Stomach (tissue), 19 donors: ENCODE measurements at regions of chr17 and their contacts with region 1.

Region 1: GRCh38 chr17:79796763-79797491 is at the start of gene CBX8:
- DNase-seq: peak; percentile 100
- H3K4me3 ChIP-seq: peak within 1 kb of the TSS; percentile 54 to 75 (median 70)
- H3K27ac ChIP-seq: peak within 1 kb of the TSS; percentile 78 to 88 (median 87)
- H3K4me1 ChIP-seq: peaks cover 49 to 80% (median 66%) of the 10 kb centered on the region in 4 donors
- H3K27me3 ChIP-seq: peaks cover 49 to 81% (median 64%) of the 10 kb centered on the region in 3 donors
- CTCF ChIP-seq: peak in 3 of 7 experiments; percentile 12 to 41 (median 40)
- EP300 ChIP-seq: no peak
- POLR2A ChIP-seq: no peak
- total RNA-seq, gene CBX8: 2.8 to 140 (median 12.0) TPM in 3 of 5 donors, not detected in the others

Region 2: DNA sequence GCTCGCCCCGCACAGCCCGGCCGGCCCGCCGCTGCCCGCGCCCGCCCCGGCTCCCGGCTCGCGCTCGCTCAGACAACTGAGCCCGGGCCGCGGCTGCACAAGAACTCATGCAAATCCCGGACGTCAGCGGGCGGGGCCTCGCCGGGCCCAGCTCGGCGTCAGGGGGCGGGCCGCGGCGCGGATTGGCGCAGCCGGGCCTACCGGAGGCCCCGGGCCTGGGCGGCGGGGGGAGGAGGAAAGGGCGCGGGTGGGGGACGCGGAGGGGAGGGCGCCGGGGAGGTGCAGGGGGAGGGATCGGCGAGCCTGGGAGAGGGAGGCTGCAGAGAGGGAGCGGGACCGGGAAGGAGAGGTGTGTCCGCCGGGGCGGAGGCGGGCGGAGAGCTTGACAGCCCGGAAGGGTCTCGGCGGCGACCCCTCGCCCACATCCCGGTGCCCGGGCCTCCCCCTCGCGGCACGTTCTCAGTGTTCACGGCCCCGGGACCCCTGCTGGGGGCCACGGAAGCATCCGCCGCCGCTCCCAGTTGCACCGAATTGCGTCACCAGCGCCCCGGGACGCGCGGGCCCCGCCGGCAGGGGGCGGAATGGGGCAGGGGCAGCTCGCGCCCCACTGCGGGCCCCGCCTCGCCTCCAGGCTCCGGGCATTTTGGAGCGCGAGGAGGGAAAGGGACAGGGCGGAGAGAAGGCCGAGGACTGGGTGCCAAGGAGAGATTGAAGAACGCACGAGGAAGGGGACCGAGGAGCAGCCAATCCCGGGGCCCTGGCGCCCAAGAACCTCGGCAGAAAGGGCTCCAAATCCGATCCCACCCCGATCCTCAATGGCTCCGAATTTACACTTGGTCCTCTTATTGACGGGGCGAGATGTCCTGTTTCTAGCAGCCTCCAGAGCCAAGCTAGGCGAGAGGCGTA is 42.7 kb after region 1 on chr17 and contains the start of gene CBX4:
- intact Hi-C with region 1: loop called (anchors 5 kb)
- DNase-seq: peak; percentile 97 to 98
- H3K4me3 ChIP-seq: peak within 1 kb of the TSS; percentile 61 to 85 (median 76)
- H3K27ac ChIP-seq: peak within 1 kb of the TSS; percentile 96 to 99 (median 98)
- H3K4me1 ChIP-seq: peaks cover 77 to 88% (median 87%) of the 10 kb centered on the region in 4 donors
- H3K27me3 ChIP-seq: peaks cover 31 to 51% (median 46%) of the 10 kb centered on the region in 3 donors
- CTCF ChIP-seq: peak in 5 of 7 experiments; percentile 31 to 78 (median 56)
- EP300 ChIP-seq: no peak
- POLR2A ChIP-seq: no peak
- total RNA-seq, gene CBX4: 1.8 to 9.8 (median 7.8) TPM